ENCODE measurements at regions of chr1 and their contacts with region 1.

Region 1: GRCh38 chr1:211469938-211470529 is 21.9 kb downstream of the RD3 start:
- DNase-seq: peak; percentile 50
- ATAC-seq: peak; percentile 99
- H3K4me3 ChIP-seq: peak overlapping the region in 1 of 2 experiments; percentile 21; a peak in 1 of 4 replicates
- H3K27ac ChIP-seq: no peak overlapping the region
- H3K4me1 ChIP-seq: peaks cover 5% of the 10 kb centered on the region; the same call in 1 of the 2 replicates
- H3K27me3 ChIP-seq: peaks cover 3% of the 10 kb centered on the region; the same call in 1 of the 2 replicates
- CTCF ChIP-seq: peak; percentile 94

Region 2: DNA sequence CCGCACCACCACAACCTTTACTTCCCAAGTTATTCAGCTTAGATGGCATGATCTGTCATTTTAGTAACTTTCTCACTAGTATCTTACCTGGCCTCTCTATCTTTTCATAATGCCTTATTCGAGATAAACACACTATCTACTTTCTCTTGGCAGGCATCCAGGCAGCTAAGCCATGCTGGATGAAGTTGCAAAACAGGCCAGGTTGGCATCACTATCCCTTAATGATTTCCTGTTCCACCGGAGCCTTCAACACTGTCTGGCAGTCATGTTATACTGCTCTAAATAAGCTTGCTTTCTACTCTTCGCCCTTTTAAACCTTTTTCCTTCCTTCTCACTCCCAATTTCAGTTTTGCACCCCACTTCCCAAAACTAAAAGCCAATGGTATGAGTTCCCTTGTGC is 324.1 kb before region 1 on chr1:
- CTCF ChIA-PET with region 1: no interaction called
- POLR2A ChIA-PET with region 1: no interaction called
- in situ Hi-C with region 1: no loop called
- intact Hi-C with region 1: no loop called
- DNase-seq: no peak
- ATAC-seq: no peak
- H3K4me3 ChIP-seq: no peak overlapping the region
- H3K27ac ChIP-seq: no peak overlapping the region
- H3K4me1 ChIP-seq: no peaks in the 10 kb centered on the region
- H3K27me3 ChIP-seq: no peaks in the 10 kb centered on the region; the same call in none of the 2 replicates
- CTCF ChIP-seq: no peak

Region 3: DNA sequence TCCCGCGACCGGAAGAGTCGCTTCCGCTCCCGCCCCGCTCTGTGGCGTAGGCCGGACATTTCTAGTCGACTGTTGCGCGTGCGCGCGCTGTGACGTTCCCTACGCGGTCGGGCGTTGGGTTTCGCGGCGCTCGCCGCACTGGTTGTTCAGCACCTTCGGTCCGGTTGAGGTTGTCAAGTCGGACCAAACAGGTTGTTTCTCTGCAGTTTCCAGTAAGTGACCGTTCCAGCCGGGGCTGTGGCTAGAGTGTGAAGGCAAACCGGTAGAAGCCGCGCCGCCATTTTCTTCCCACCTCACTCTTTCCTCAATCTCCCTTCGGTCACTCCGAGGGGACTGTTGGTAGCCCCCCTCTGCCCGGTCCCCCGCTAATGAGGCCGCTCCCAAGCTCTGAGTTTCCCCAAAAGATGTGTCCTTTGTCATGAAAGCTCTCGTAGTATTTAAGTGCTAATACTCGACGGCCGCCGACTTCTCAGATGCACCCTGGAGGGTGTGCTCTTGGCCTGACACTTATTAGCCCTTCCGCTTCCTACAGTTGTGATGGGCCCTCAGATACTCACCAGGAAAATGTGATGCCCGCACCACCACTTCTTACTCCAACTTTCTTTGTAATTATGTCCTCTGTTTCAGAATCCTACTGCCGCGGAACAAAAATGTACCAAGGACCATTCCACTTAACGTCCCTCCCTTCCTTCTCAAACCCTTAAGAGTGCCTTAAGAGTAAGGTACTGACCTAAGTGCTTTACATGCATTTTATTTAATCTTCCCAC is 87.1 kb before region 1 on chr1:
- CTCF ChIA-PET with region 1: no interaction called
- POLR2A ChIA-PET with region 1: no interaction called
- in situ Hi-C with region 1: no loop called
- intact Hi-C with region 1: no loop called
- DNase-seq: peak; percentile 76
- ATAC-seq: peak; percentile 100
- H3K4me3 ChIP-seq: peak overlapping the region; percentile 76 to 81
- H3K27ac ChIP-seq: peak overlapping the region; percentile 96
- H3K4me1 ChIP-seq: 0 out of 2 replicates have a peak, but pooled peaks cover 6% of the 10 kb centered on the region
- H3K27me3 ChIP-seq: no peaks in the 10 kb centered on the region
- CTCF ChIP-seq: no peak

Region 4: DNA sequence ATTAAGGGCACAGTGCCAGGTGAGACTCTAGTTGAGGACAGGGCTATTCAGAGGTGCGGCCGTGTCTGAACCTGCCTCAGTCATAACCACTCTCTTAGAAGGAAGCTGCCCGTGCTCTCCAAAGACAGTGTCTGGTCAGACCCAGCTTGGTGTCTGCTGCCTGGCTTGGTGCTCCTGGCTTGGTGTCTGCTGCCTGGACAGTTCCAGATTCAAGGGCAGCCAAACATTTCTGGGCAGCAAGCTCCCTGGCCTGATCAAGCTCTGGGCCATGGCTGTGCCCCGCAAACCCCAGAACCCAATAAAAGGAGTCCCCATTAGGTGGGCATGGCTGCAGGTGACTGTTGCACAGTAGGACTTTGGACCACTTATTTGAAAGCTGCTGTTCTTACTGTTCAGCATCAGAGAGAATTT is 177.7 kb after region 1 on chr1:
- CTCF ChIA-PET with region 1: no interaction called
- POLR2A ChIA-PET with region 1: no interaction called
- in situ Hi-C with region 1: no loop called
- intact Hi-C with region 1: loop called (anchors 2 kb)
- DNase-seq: no peak
- ATAC-seq: no peak
- H3K4me3 ChIP-seq: no peak overlapping the region
- H3K27ac ChIP-seq: peak overlapping the region; percentile 64
- H3K4me1 ChIP-seq: peaks cover 34% of the 10 kb centered on the region
- H3K27me3 ChIP-seq: no peaks in the 10 kb centered on the region
- CTCF ChIP-seq: no peak

Measured in Panc1 (cell line).